Activated B cell treated with CpG ODN at 0.5 μM for 24 hours (primary cell): ENCODE measurements at regions of chr3 and their contacts with region 1.

Region 1: DNA sequence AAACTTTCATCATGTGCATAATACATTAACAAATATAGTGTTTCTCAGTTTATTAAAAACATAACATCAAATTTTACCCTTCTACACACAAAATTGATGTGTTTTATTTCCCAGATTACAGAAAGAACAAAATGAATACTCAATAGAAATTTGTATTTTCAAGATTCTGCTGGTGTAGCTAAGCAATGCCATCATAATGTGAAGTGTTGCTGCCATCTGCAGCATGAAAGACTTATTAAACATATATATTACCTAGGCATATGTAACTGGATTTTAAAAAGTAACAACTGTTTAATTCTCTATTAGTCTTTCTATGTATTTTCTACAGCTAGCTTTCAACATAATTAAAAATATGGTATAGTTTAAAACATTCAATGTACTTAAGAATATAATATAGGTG is 27.5 kb downstream of the PLSCR5 start:
- DNase-seq: no peak
- ATAC-seq: no peak
- H3K4me3 Mint-ChIP-seq: no peak overlapping the region
- H3K27ac Mint-ChIP-seq: no peak overlapping the region
- H3K4me1 Mint-ChIP-seq: no peaks in the 10 kb centered on the region
- H3K27me3 Mint-ChIP-seq: no peaks in the 10 kb centered on the region
- CTCF ChIP-seq: peak; percentile 49

Region 2: DNA sequence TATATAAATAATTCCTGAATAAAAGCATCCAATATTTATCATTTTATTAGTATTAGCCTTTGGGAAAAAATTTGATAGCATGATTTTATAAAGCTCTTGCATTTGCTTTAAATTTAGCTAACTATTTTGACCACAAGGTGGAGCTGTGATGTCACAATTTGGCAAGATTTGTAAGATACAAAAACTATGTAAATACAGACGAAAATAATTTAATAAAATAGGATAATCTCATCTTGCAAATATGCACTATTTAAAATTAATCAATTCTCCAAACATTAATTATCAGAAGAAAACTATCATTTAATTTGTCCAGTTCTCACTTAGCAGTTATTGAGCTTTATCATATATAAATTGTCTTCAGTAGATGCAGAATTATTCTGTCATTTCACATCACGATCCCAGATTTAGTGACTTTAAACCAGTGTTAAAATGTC is 512.1 kb before region 1 on chr3:
- CTCF ChIA-PET with region 1: interaction called, 11 read pairs
- POLR2A ChIA-PET with region 1: no interaction called
- intact Hi-C with region 1: loop called (anchors 1 kb)
- DNase-seq: no peak
- ATAC-seq: no peak
- H3K4me3 Mint-ChIP-seq: no peak overlapping the region
- H3K27ac Mint-ChIP-seq: no peak overlapping the region
- H3K4me1 Mint-ChIP-seq: no peaks in the 10 kb centered on the region
- H3K27me3 Mint-ChIP-seq: no peaks in the 10 kb centered on the region
- CTCF ChIP-seq: peak; percentile 91

Region 3: DNA sequence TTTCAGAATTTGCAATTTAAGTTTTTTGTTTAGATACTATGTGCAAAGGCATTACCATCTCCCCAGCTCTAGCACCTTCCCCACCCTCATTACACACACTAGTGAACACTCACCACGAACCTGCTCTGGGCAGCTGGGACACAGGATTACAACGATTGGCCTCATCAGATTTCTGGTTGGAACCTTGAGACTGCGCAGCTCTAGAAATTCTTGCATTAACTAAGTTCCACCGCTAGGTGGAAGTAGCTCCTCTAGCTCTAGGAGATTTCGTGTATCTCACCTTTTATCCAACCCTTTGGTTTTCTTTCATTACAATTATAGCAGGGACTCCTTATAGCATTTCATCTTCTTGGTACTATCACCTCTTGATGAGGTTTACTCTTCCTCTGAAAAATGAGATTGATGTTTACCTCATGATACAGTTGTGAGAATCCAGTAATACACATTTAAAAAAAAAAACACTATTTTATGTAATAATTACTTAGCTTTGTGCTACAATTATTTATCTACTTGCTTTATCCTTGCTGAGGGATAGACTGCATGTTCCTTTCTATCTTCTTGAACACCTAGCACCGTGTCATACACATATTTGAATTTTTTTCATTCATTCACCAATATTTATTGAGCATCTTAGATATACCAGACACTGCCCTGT is 388.0 kb before region 1 on chr3:
- CTCF ChIA-PET with region 1: interaction called, 52 read pairs
- POLR2A ChIA-PET with region 1: no interaction called
- intact Hi-C with region 1: loop called (anchors 1 kb)
- DNase-seq: no peak
- ATAC-seq: peak; percentile 56
- H3K4me3 Mint-ChIP-seq: no peak overlapping the region
- H3K27ac Mint-ChIP-seq: no peak overlapping the region
- H3K4me1 Mint-ChIP-seq: no peaks in the 10 kb centered on the region
- H3K27me3 Mint-ChIP-seq: peaks cover 2% of the 10 kb centered on the region
- CTCF ChIP-seq: peak; percentile 79

Region 4: GRCh38 chr3:146218880-146219866 is 358.5 kb before region 1 on chr3:
- CTCF ChIA-PET with region 1: interaction called, 24 read pairs
- POLR2A ChIA-PET with region 1: no interaction called
- intact Hi-C with region 1: loop called (anchors 1 kb)
- DNase-seq: no peak
- ATAC-seq: no peak
- H3K4me3 Mint-ChIP-seq: no peak overlapping the region
- H3K27ac Mint-ChIP-seq: no peak overlapping the region
- H3K4me1 Mint-ChIP-seq: no peaks in the 10 kb centered on the region
- H3K27me3 Mint-ChIP-seq: peaks cover 4% of the 10 kb centered on the region
- CTCF ChIP-seq: peak; percentile 80

Region 5: DNA sequence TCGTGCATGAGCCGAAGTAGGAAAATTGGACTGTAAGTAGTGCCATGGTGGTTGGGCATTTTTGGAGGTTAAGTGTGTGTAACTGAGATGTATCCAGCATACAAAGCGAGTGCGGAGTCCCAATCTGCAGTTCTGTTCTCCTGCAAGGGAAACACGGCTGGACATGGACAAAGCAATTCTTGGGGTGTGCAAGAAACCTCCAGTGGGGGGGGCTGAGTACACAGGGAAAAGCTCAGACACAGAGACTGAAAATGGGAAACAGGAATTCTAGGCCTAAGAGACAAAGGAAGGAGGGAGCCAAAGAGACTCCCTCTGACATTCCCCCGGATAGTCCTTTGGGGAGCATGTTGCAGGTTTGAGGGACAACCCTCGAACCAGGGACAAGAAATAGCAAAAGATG is 243.5 kb before region 1 on chr3:
- CTCF ChIA-PET with region 1: no interaction called
- POLR2A ChIA-PET with region 1: no interaction called
- intact Hi-C with region 1: loop called (anchors 10 kb)
- DNase-seq: no peak
- ATAC-seq: no peak
- H3K4me3 Mint-ChIP-seq: no peak overlapping the region
- H3K27ac Mint-ChIP-seq: no peak overlapping the region
- H3K4me1 Mint-ChIP-seq: no peaks in the 10 kb centered on the region
- H3K27me3 Mint-ChIP-seq: no peaks in the 10 kb centered on the region
- CTCF ChIP-seq: no peak

Region 6: GRCh38 chr3:146550743-146551510 is 26.7 kb before region 1 on chr3:
- CTCF ChIA-PET with region 1: no interaction called
- POLR2A ChIA-PET with region 1: no interaction called
- intact Hi-C with region 1: no loop called
- DNase-seq: no peak
- ATAC-seq: no peak
- H3K4me3 Mint-ChIP-seq: no peak overlapping the region
- H3K27ac Mint-ChIP-seq: no peak overlapping the region
- H3K4me1 Mint-ChIP-seq: peaks cover 5% of the 10 kb centered on the region
- H3K27me3 Mint-ChIP-seq: no peaks in the 10 kb centered on the region
- CTCF ChIP-seq: no peak

Region 7: DNA sequence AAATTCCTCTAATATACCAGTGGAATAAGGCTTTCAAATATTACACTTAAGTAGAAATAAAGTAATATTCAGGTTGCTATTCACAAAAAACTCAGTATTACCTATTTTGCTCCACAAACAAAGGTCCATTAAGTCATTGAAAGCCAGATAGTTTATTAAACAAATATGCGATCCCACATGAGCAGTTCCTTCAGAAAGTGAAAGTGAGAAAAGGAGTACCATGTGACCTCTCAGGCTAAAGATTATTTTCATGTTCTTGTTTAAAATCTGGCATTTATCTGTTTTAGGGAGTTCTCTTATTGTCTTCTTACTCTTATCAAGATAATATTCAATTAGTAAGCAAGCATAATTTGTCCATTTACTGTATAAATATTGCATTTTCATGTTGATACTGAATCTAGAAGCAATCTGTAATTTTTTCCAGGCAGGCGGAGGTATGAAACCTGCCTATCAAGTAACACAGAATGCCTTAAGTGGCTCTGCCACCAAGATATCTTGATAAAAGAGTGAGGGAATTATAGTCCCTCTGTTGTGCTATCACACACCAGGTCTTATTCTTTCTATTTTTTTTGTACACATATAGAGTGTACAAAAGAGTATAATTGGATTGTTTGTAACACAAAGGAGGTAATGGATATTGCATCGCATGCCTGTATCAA is 47.6 kb after region 1 on chr3:
- CTCF ChIA-PET with region 1: no interaction called
- POLR2A ChIA-PET with region 1: no interaction called
- intact Hi-C with region 1: no loop called
- DNase-seq: no peak
- ATAC-seq: no peak
- H3K4me3 Mint-ChIP-seq: peak overlapping the region; percentile 44
- H3K27ac Mint-ChIP-seq: no peak overlapping the region
- H3K4me1 Mint-ChIP-seq: peaks cover 11% of the 10 kb centered on the region
- H3K27me3 Mint-ChIP-seq: no peaks in the 10 kb centered on the region
- CTCF ChIP-seq: no peak